Ovary (tissue), 10 donors: ENCODE measurements at regions of chr17 and their contacts with region 1.

Region 1: DNA sequence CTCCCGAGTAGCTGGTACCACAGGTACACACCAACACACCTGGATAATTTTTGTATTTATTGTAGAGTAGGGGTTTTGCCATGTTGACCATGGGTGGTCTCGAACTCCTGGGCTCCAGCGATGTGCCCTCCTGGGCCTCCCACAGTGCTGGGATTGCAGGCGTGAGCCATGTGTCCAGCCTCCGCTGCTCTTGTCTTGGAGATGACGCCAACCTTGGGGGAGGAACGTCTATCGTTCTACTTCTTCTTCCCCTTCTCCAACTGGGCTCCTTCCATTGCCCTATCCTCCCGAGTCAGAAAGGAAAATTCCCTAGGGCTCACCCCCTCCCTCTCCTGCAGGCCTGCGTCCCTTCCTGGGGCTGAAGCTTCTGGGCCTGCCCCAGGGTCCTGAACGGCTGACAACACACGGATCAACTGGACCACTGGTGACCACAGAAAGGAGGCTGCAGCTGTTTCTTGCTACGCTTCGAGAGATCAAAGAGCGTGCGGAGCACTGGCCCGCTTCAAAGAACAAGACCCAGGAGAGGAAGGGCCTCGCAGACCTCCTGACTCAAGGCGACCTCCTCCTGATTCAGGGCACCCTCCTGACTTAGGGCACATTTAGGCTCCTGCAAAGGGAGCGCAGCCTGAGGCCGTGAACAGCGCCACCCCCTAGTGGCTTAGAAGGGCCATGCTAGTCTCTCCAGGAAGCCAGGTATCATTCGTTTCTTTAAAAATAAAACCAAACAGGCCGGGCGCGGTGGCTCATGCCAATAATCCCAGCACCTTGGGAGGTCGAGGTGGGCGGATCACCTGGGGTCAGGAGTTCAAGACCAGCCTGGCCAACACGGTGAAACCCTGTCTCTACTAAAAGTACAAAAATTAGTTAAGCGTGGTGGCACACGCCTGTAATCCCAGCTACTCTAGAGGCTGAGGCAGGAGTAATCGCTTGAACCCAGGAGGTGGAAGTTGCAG is 48.5 kb upstream of the HELZ start:
- DNase-seq: peak; percentile 39 to 74 (median 55)
- H3K4me3 ChIP-seq: no peak overlapping the region
- H3K27ac ChIP-seq: no peak overlapping the region
- H3K4me1 ChIP-seq: peaks cover 5% of the 10 kb centered on the region
- H3K27me3 ChIP-seq: no peaks in the 10 kb centered on the region
- CTCF ChIP-seq: peak; percentile 47 to 59 (median 49)
- EP300 ChIP-seq: no peak
- POLR2A ChIP-seq: no peak

Region 2: GRCh38 chr17:66715745-66716156 is 577.8 kb before region 1 on chr17:
- intact Hi-C with region 1: loop called in 1 of 4 experiments (anchors 10 kb)
- DNase-seq: no peak
- H3K4me3 ChIP-seq: no peak overlapping the region
- H3K27ac ChIP-seq: no peak overlapping the region
- H3K4me1 ChIP-seq: no peaks in the 10 kb centered on the region
- H3K27me3 ChIP-seq: no peaks in the 10 kb centered on the region
- CTCF ChIP-seq: peak in 2 of 3 donors; percentile 30 to 62
- EP300 ChIP-seq: no peak
- POLR2A ChIP-seq: no peak

Region 3: DNA sequence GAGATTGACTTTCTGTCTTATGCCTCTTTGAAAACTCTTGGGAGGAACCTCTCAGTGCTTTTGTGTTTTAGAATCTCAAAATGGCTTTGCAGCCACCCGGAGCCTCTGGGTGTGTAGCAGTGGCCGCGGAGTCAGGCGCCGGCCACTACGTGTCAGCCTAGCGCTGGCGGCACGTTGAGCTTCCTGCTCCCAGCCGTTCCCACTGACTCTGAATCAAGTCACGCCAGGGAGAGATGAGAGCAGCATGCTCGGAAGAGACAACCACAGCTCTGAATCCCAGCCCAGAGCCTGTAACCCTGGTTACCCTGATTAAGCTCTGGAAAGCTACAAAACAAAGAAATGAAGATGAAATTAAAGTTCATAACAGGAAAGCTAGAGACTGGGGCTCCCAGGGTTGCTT is 556.0 kb before region 1 on chr17:
- intact Hi-C with region 1: loop called in 1 of 4 experiments (anchors 10 kb)
- DNase-seq: peak; percentile 39 to 55 (median 41)
- H3K4me3 ChIP-seq: no peak overlapping the region
- H3K27ac ChIP-seq: no peak overlapping the region
- H3K4me1 ChIP-seq: no peaks in the 10 kb centered on the region
- H3K27me3 ChIP-seq: no peaks in the 10 kb centered on the region
- CTCF ChIP-seq: no peak
- EP300 ChIP-seq: no peak
- POLR2A ChIP-seq: no peak

Region 4: DNA sequence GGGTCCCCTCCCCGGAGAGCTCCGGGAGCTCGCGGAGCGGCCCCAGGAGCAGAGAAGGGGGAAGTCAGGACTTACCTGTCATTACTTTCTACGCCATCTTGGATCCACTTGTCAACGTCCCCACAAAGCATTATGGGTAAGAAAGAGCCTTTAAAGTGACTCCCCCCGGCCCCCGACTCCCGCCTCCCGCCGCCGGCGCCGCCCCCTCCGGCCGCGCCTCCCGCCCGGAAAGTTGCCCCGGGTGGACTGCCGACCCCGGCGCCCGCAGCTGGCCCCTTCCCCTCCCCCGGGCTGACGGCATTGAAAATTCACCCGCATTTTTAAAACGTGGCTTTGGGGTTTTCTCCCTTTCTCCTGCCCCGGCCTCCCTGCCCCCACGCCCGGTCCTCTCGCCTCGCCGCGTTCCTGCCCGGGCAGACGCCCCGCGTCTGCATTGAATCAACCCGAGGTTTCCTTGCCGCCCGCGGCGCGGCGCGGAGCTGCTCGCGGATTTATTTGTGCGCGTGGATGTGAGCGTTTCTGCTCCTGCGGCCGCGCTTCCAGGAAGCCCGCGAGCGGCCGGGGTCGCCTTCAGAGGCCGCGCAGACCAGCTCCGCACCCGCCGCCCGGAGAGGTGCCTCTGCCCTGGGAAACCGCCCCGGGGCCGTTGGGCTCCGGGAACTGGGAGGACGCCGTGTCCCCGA is 48.3 kb before region 1 on chr17 and contains the start of gene HELZ:
- intact Hi-C with region 1: loop called in 1 of 4 experiments (anchors 5 kb)
- DNase-seq: peak; percentile 72 to 82 (median 78)
- H3K4me3 ChIP-seq: peak within 1 kb of the TSS; percentile 95
- H3K27ac ChIP-seq: peak within 1 kb of the TSS; percentile 83 to 98
- H3K4me1 ChIP-seq: peaks cover 4% of the 10 kb centered on the region
- H3K27me3 ChIP-seq: no peaks in the 10 kb centered on the region
- CTCF ChIP-seq: no peak
- EP300 ChIP-seq: no peak
- POLR2A ChIP-seq: no peak
- total RNA-seq, gene HELZ: 45.3 to 72.8 (median 58.3) TPM